A673 (cell line): ENCODE measurements at regions of chr2 and their contacts with region 1.

Region 1: GRCh38 chr2:98191883-98192282 is 104.9 kb downstream of the VWA3B start:
- DNase-seq: no peak
- H3K4me3 ChIP-seq: no peak overlapping the region
- H3K27ac ChIP-seq: no peak overlapping the region
- H3K4me1 ChIP-seq: no peaks in the 10 kb centered on the region
- H3K27me3 ChIP-seq: peaks cover 60% of the 10 kb centered on the region
- CTCF ChIP-seq: no peak

Region 2: DNA sequence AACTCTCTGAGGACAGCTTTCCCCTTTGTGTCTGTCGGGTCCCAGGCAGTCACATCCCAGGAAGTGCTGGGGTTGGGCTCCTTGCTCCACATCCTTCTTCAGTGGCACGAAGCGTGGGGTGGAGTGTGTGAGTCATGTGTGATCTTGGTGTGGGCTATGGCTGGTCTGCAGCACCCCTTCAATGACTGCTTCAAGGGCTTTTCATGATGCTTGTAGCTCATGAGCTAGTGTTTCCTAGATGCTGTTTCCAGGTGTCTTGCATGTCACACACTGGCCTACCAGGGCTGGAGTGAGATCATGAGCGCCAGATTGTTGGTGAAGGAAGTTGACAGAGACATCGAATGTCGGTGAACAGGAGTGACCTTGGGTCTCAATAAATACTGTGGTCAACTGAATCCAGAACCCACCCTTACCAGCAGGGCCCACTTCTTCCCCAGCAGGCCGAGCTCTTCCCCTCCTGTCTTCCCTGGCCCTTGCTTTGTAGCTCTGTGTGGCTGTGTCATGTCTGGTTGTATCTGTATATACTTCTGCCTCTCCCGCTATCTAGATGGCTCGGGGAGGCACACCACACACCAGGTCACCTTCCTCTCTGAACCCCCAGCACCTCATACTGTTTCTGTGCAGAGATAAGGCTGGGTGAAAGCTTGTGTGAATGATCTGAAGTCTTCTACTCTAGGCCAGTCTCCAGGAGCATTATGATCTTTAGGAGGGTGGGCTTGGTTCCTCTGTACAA is 518.5 kb before region 1 on chr2:
- CTCF ChIA-PET with region 1: no interaction called
- POLR2A ChIA-PET with region 1: no interaction called
- intact Hi-C with region 1: no loop called
- DNase-seq: no peak
- H3K4me3 ChIP-seq: no peak overlapping the region
- H3K27ac ChIP-seq: no peak overlapping the region
- H3K4me1 ChIP-seq: no peaks in the 10 kb centered on the region
- H3K27me3 ChIP-seq: no peaks in the 10 kb centered on the region
- CTCF ChIP-seq: no peak

Region 3: DNA sequence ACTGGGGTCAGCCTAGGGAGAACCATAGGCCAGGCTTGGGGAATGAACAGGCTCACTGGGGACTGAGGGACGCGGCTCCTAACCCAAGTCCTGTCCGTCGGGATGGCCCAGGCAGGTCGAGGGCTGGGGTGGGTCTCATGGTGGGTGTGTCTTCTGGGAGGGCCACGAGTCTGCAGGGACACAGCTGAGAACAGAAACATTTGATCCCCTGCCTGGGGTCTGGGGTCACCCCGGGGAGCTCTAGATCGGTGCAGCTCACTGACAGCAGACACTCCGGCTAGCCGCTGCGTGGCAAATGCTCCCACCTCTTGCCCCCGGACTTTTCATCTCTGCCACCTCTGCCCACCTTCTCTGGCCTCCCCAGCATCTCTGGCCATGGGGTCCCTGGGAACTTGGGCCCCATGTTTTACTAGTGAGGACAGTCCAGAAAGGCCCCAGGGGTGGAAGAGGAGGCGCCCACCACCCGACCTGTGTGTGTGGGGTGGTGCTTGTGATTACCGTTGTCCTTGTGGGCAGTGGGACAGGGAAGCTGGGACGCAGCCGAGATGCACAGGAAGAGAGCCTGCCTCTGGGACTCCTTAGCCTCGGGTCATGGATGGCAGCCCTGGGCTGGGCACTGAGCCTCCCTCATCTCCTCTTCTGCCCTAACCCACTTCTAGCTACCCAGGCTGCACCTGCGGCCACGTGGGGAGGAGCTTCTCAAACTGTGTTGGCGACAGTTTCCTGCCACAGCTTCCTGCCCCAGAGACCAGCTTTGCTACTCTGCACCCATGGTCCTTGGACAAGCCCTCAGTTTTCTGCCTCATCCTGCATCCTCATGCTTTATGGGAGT is 473.6 kb before region 1 on chr2:
- CTCF ChIA-PET with region 1: no interaction called
- POLR2A ChIA-PET with region 1: no interaction called
- intact Hi-C with region 1: no loop called
- DNase-seq: no peak
- H3K4me3 ChIP-seq: no peak overlapping the region
- H3K27ac ChIP-seq: no peak overlapping the region
- H3K4me1 ChIP-seq: no peaks in the 10 kb centered on the region
- H3K27me3 ChIP-seq: no peaks in the 10 kb centered on the region
- CTCF ChIP-seq: no peak

Region 4: GRCh38 chr2:97798416-97798815 is 393.5 kb before region 1 on chr2:
- CTCF ChIA-PET with region 1: no interaction called
- POLR2A ChIA-PET with region 1: no interaction called
- intact Hi-C with region 1: loop called (anchors 10 kb)
- DNase-seq: no peak
- H3K4me3 ChIP-seq: no peak overlapping the region
- H3K27ac ChIP-seq: no peak overlapping the region
- H3K4me1 ChIP-seq: no peaks in the 10 kb centered on the region
- H3K27me3 ChIP-seq: no peaks in the 10 kb centered on the region
- CTCF ChIP-seq: no peak

Region 5: DNA sequence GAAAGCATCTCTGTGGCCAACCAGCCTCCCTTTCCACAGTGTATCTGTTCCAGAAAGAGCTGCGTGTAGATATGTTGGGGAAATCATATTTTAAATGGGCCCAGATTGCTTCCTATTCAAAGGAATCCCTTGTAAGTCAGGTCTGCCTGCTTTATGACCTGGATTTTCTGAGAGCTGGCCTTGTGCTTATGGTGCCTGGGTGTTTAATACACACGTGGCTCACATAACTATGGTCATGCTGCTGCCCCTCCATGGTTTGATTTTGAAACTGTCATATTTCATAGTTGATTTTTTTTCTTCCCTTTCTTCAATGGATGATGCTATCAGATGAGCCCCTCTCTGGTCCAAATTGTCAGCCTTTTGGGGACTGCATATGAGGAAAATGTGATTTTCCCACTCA is 42.9 kb after region 1 on chr2:
- CTCF ChIA-PET with region 1: no interaction called
- POLR2A ChIA-PET with region 1: no interaction called
- intact Hi-C with region 1: no loop called
- DNase-seq: no peak
- H3K4me3 ChIP-seq: no peak overlapping the region
- H3K27ac ChIP-seq: no peak overlapping the region
- H3K4me1 ChIP-seq: no peaks in the 10 kb centered on the region
- H3K27me3 ChIP-seq: peaks cover 16% of the 10 kb centered on the region
- CTCF ChIP-seq: no peak